ENCODE measurements at regions of chr17 and their contacts with region 1.

Region 1: GRCh38 chr17:38704645-38705522 is at the start of gene MLLT6:
- DNase-seq: peak; percentile 64 to 88 (median 82)
- H3K4me3 ChIP-seq: peak within 1 kb of the TSS; percentile 64 to 98 (median 83)
- H3K27ac ChIP-seq: peak within 1 kb of the TSS; percentile 68 to 97 (median 93)
- H3K27me3 ChIP-seq: no peaks in the 10 kb centered on the region
- CTCF ChIP-seq: peak in 3 of 56 donors; percentile 8 to 20 (median 13)
- total RNA-seq, gene MLLT6: 118 to 242 (median 168) TPM

Region 2: DNA sequence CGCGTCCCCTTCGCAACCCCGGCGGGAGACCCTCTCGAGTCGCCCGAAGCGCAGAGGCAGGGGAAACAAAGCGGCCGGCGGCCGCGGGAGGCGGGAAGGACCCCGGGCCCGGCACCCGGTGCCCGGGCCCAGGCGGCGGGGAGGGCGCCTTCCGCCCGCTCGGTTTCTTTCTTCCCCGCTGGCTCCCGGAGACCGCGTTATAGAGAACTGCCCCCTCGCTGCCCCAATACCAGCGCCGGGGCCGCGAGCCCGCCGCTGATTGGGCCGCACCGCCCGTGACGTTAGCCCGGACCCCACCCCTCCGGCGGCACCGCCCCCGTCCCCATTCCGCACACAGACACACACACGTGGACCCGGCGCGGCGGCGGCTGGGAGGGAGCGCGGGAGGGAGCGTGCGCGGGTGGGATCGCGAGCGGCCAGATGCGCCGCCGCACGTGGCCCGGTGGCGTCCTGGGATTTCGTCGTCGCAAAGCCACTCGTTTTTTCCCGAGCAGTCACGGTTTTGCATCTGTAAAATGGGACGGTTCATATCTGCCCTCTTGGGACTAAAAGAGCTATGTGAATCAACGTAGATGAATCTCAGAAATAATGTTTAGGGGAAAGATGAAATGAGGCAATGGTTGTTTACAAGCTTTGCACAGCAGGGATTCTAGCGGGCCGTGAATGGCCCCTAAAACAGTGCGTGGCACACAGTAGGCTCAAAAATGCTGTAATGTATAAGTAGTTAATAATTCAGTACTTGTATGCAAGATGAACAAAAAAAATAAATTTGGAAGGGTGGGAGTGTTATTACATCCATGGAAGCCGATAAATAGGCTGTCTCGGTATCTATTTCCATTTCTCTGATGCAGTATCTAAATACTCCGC is 29.9 kb before region 1 on chr17 and contains the start of gene EPOP:
- intact Hi-C with region 1: loop called (anchors 2 kb)
- DNase-seq: peak; percentile 65 to 95 (median 90)
- H3K4me3 ChIP-seq: peak within 1 kb of the TSS; percentile 39 to 80 (median 67)
- H3K27ac ChIP-seq: peak within 1 kb of the TSS in 46 of 59 donors; percentile 10 to 88 (median 42)
- H3K27me3 ChIP-seq: peaks cover 0 to 12% (median 0%) of the 10 kb centered on the region in 45 donors
- CTCF ChIP-seq: peak in 22 of 56 donors; percentile 4 to 53 (median 26)
- total RNA-seq, gene EPOP: 4.4 to 32.8 (median 13.7) TPM

Region 3: DNA sequence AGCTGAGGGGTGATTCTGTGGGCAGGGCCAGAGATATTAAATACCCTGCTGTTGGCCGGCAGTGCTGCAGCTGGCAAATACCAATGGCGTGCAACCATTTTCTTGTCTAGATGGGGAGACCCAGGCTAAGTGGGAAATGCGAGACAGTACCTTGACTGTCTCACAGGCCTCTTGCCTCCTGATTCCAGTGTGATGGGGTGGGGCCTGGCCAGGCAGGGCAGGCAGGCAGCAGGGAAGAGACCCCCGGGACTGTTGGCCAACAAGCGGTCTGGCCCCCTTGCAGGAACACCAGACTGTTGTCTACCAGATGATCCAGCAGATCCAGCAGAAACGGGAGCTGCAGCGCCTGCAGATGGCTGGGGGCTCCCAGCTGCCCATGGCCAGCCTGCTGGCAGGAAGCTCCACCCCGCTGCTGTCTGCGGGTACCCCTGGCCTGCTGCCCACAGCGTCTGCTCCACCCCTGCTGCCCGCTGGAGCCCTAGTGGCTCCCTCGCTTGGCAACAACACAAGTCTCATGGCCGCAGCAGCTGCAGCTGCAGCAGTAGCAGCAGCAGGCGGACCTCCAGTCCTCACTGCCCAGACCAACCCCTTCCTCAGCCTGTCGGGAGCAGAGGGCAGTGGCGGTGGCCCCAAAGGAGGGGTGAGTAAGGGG is 19.6 kb after region 1 on chr17:
- intact Hi-C with region 1: loop called in 1 of 2 experiments (anchors 2 kb)
- DNase-seq: peak in 9 of 10 donors; percentile 85 to 94 (median 90)
- H3K4me3 ChIP-seq: peak overlapping the region in 43 of 59 donors; percentile 2 to 51 (median 28)
- H3K27ac ChIP-seq: peak overlapping the region; percentile 35 to 96 (median 88)
- H3K27me3 ChIP-seq: no peaks in the 10 kb centered on the region
- CTCF ChIP-seq: peak in 31 of 56 donors; percentile 2 to 53 (median 27)

Region 4: DNA sequence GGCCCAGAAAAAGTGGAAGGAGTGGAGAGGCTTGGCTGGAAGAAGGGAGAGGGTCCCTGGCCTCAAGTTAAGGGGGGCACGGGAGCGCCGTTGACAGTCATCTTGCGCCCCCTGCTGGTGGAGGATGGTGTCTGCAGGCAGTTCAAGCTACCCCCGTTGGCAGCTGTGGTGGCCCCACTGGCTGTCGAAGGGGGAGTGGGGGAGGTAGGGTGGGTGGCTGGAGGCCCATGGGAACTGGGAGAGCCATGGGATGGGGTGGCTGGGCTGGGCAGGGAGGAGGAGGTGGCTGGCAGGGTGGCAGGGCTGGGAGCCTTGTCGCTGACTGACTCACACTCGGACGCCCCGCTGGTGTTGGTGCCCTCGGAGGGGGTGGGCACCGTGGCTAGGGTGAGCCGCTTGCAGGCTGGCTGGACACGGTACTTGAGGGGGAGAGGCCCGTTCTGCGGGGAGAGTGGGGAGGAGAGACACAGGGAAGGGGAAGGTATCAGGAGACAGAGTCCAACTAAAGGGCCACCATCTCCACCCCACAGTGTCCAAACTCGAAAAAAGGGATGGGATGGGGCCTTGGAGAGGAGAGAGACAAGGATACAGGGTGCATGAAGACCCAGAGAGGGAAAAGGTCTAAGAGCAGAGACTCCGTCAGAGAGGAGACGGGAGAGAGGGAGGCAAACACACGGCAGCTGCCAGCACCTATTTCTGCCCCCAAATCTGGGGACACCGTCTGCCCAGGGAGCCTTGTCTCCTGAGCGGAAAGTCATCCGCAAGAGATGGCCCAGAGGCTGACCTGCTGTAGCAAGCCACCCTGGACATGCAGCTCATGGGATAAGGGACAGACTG is 30.5 kb after region 1 on chr17:
- intact Hi-C with region 1: no loop called
- DNase-seq: peak in 8 of 10 donors; percentile 54 to 71 (median 68)
- H3K4me3 ChIP-seq: no peak overlapping the region
- H3K27ac ChIP-seq: peak overlapping the region in 10 of 59 donors; percentile 5 to 46 (median 25)
- H3K27me3 ChIP-seq: no peaks in the 10 kb centered on the region
- CTCF ChIP-seq: peak; percentile 58 to 95 (median 88)